Psoas muscle (tissue), 8 donors: ENCODE measurements at regions of chr15 and their contacts with region 1.

Region 1: GRCh38 chr15:54347082-54347827 is 369.0 kb downstream of the UNC13C start:
- DNase-seq: no peak
- ATAC-seq: no peak
- H3K4me3 ChIP-seq: no peak overlapping the region
- H3K27ac ChIP-seq: no peak overlapping the region
- H3K4me1 ChIP-seq: no peaks in the 10 kb centered on the region
- H3K27me3 ChIP-seq: no peaks in the 10 kb centered on the region
- CTCF ChIP-seq: no peak

Region 2: DNA sequence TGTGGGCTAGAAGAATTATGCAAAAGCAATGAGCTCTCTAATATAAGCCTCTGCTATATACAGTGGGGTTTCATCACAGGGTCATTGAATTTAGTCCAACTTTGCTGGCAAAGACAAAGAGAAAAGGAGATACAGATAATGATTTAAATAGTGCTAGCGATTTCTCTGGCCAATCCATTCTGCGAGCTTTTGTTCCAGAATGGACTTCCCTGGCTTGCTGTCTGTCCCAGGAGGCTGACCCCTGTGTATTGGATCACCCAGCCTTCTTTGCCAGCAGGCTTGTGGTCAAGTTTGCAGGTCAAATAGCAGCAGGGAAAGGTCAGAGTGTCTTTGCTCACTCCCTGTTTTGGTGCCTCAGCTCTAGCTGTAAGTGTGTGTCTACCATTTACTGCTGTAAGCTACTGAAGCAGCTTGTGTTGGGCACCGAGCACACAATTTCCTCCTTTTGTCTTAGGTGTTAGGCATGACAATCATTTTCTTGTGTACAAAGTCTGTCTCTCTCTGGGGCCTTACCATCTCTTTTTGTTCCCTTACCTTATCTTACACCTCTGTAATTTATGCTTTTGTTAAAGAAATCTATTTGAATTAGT is 313.3 kb before region 1 on chr15:
- intact Hi-C with region 1: no loop called
- DNase-seq: peak in 1 of 2 donors; percentile 48
- ATAC-seq: peak in 3 of 4 donors; percentile 69 to 91 (median 89)
- H3K4me3 ChIP-seq: no peak overlapping the region
- H3K27ac ChIP-seq: no peak overlapping the region
- H3K4me1 ChIP-seq: no peaks in the 10 kb centered on the region
- H3K27me3 ChIP-seq: no peaks in the 10 kb centered on the region
- CTCF ChIP-seq: no peak

Region 3: GRCh38 chr15:54304321-54304720 is 42.9 kb before region 1 on chr15:
- intact Hi-C with region 1: loop called in 1 of 2 experiments (anchors 2 kb)
- DNase-seq: no peak
- ATAC-seq: no peak
- H3K4me3 ChIP-seq: no peak overlapping the region
- H3K27ac ChIP-seq: no peak overlapping the region
- H3K4me1 ChIP-seq: no peaks in the 10 kb centered on the region
- H3K27me3 ChIP-seq: no peaks in the 10 kb centered on the region
- CTCF ChIP-seq: no peak

Region 4: DNA sequence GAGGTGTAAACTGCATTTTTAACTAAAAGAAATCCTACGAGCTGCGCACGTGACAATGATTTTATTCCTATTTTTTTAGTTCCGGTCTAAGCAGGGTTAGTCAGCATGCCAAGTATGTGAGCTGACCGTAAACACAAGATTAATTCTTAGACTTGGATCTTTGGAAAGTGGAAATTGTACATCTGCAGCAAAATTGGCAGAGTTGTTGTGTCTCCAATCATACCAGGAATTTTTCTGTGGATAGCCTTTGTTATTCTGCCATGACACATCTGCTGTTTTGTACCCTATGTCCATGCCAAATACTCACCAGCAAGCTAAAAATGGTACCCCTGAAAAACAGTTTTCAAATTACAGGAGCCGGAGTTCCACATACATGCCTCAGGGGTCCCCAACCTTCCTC is 193.5 kb after region 1 on chr15:
- intact Hi-C with region 1: no loop called
- DNase-seq: no peak
- ATAC-seq: no peak
- H3K4me3 ChIP-seq: no peak overlapping the region
- H3K27ac ChIP-seq: no peak overlapping the region
- H3K4me1 ChIP-seq: no peaks in the 10 kb centered on the region
- H3K27me3 ChIP-seq: no peaks in the 10 kb centered on the region
- CTCF ChIP-seq: no peak